Panc1 (cell line): ENCODE measurements at regions of chr3 and their contacts with region 1.

Region 1: GRCh38 chr3:112136959-112137693 is 4.1 kb upstream of the GCSAM start:
- DNase-seq: peak; percentile 39
- ATAC-seq: peak; percentile 84
- H3K4me3 ChIP-seq: no peak overlapping the region
- H3K27ac ChIP-seq: no peak overlapping the region
- H3K4me1 ChIP-seq: no peaks in the 10 kb centered on the region
- H3K27me3 ChIP-seq: peaks cover 7% of the 10 kb centered on the region; the same call in 1 of the 2 replicates
- CTCF ChIP-seq: peak; percentile 84

Region 2: DNA sequence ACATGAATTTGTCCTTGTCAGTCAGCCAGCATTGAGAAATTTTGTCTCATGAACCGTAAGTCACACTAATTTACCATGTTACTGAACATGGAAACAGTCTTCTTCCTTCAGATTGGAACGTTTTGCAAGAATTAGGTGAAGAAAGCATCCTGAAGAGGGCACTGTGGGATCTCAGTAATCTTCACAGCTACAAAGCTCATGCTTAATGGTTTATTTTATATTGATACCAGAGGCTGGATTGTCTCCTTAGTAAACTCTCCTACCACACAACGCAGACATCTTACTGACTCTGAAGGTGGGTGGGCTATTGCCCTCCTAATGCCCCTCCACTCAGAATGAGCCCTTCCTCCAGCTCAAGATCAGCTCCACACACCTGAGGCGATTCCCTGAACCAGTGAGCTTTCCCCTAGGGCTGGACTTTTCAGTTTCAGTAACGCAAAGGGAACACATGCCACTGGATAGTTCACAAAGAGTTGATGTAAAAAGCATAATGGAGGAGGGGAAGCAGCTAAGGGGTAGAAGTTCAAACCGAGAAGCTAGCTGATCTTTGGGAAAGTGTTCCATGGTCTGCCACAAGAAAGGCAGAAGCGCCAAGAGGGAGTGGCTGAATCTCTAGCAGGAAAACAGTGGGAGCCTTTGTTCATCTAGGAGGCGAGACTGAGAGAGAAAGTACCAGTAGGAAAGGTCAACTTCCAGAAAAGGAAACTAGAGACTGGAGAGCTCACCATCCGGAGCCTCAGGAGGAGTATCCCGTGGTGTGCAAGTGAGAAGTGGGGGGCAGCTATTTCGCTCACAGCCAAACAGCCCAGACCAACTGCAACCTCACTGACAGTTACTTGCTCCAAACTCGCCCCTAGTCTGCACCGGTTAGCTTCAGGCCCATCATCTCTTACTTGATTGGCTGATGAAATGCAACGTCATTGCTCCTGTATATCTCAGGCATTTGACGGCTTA is 156.5 kb after region 1 on chr3 and contains the start of gene SLC9C1:
- CTCF ChIA-PET with region 1: interaction called, 4 read pairs
- POLR2A ChIA-PET with region 1: no interaction called
- in situ Hi-C with region 1: no loop called
- intact Hi-C with region 1: loop called (anchors 5 kb)
- DNase-seq: peak; percentile 58
- ATAC-seq: peak; percentile 92
- H3K4me3 ChIP-seq: peak within 1 kb of the TSS; percentile 19 to 49
- H3K27ac ChIP-seq: no peak within 1 kb of the TSS
- H3K4me1 ChIP-seq: no peaks in the 10 kb centered on the region
- H3K27me3 ChIP-seq: no peaks in the 10 kb centered on the region
- CTCF ChIP-seq: peak; percentile 78
- total RNA-seq, gene SLC9C1: not detected

Region 3: GRCh38 chr3:112437146-112438022 is 300.3 kb after region 1 on chr3:
- CTCF ChIA-PET with region 1: no interaction called
- POLR2A ChIA-PET with region 1: no interaction called
- in situ Hi-C with region 1: no loop called
- intact Hi-C with region 1: loop called (anchors 2 kb)
- DNase-seq: peak; percentile 4
- ATAC-seq: peak; percentile 87
- H3K4me3 ChIP-seq: no peak overlapping the region
- H3K27ac ChIP-seq: no peak overlapping the region
- H3K4me1 ChIP-seq: no peaks in the 10 kb centered on the region
- H3K27me3 ChIP-seq: no peaks in the 10 kb centered on the region
- CTCF ChIP-seq: peak; percentile 74

Region 4: DNA sequence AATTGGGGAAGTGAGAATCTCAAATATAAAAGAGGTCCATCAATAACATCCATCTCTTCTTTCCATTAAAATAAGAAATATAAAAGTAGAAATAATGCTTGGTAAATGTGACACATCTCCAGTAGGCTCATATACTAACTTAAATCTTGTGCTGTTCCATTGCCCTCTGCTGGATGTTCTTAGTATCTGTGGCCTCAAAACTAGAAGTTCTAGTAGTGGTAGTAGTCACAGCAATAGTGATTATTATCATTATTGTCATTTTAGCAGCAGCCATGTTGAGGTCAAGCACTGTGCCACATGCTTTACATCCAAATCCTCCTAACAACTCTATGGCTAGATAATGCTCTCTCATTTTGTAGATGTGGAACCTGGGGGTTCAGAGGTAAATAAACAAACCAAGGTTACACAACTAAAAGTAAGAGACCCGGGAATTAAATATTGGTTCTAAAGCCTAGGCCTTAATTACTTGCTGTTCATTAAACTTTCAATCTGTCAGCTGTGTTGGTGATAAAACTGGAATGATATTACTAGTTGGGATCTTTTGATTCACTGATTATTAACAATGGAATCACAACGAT is 382.4 kb after region 1 on chr3:
- CTCF ChIA-PET with region 1: no interaction called
- POLR2A ChIA-PET with region 1: no interaction called
- in situ Hi-C with region 1: no loop called
- intact Hi-C with region 1: loop called (anchors 2 kb)
- DNase-seq: peak; percentile 36
- ATAC-seq: peak; percentile 92
- H3K4me3 ChIP-seq: no peak overlapping the region
- H3K27ac ChIP-seq: no peak overlapping the region
- H3K4me1 ChIP-seq: no peaks in the 10 kb centered on the region
- H3K27me3 ChIP-seq: no peaks in the 10 kb centered on the region
- CTCF ChIP-seq: peak; percentile 75; the same call in 1 of the 2 replicates

Region 5: DNA sequence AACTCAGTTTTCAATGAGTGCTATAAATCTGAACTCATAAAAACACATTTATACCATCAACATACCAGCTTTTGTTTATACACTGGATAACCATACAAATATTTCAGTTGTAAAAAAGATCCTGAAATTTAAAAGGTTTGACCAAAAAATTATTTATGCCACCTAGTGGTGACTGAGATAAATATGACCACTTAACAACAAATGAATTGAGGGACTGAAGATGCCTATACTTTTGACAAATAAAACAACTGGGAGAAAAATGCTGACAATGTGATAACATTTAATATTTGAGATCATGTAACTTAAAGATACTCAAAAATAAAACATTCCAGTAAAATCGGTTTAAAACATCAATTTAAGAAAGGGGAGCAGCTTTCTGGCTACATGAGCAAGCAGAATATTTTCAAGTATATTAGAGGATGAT is 394.2 kb after region 1 on chr3:
- CTCF ChIA-PET with region 1: no interaction called
- POLR2A ChIA-PET with region 1: no interaction called
- in situ Hi-C with region 1: no loop called
- intact Hi-C with region 1: loop called (anchors 5 kb)
- DNase-seq: no peak
- ATAC-seq: no peak
- H3K4me3 ChIP-seq: no peak overlapping the region
- H3K27ac ChIP-seq: no peak overlapping the region
- H3K4me1 ChIP-seq: no peaks in the 10 kb centered on the region
- H3K27me3 ChIP-seq: no peaks in the 10 kb centered on the region
- CTCF ChIP-seq: peak; percentile 68; the same call in 1 of the 2 replicates